Activated CD4-positive, alpha-beta T cell treated with anti-CD3 and anti-CD28 coated beads for 36 hours (primary cell): ENCODE measurements at regions of chr12 and their contacts with region 1.

Region 1: GRCh38 chr12:88241862-88242570 is 99.9 kb downstream of the TMTC3 start:
- DNase-seq: peak; percentile 57
- ATAC-seq: peak; percentile 95
- H3K4me3 Mint-ChIP-seq: no peak overlapping the region
- H3K27ac Mint-ChIP-seq: peak overlapping the region; percentile 91
- H3K4me1 Mint-ChIP-seq: peaks cover 36% of the 10 kb centered on the region
- H3K27me3 Mint-ChIP-seq: peaks cover 13% of the 10 kb centered on the region

Region 2: DNA sequence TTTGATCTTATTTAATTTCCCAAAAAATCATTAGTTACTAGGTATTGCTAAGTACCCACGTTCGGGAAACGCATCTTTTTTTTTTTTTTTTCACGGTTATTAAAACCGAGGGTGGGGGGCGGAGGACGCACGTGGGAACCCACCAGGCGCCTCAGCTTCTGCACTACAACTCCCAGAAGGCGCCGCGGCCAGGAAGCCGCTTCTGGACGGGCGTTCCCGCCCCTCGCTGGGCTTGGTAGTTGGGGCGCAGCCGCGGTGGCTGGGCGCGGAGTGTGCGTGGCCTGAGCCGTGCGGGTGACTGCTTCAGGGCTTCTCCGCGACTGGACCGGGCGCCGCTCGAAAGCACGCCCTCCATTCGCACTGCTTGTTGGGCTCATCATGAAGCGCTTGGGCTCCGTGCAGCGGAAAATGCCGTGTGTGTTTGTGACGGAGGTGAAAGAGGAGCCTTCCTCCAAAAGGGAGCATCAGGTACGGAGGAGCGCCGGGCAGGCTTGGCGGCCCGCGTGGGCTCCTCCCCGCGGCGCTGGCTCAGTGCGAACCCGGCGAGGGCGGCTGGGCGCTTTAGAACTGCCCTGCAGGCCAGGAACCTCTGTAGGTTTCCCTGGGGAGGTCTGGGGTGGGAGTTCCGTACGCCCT is 206.6 kb before region 1 on chr12:
- CTCF ChIA-PET with region 1: no interaction called
- POLR2A ChIA-PET with region 1: no interaction called
- intact Hi-C with region 1: loop called in 1 of 2 experiments (anchors 5 kb)
- DNase-seq: peak; percentile 94
- ATAC-seq: peak; percentile 98
- H3K4me3 Mint-ChIP-seq: peak overlapping the region; percentile 82
- H3K27ac Mint-ChIP-seq: peak overlapping the region; percentile 90
- H3K4me1 Mint-ChIP-seq: peaks cover 54% of the 10 kb centered on the region
- H3K27me3 Mint-ChIP-seq: no peaks in the 10 kb centered on the region

Region 3: DNA sequence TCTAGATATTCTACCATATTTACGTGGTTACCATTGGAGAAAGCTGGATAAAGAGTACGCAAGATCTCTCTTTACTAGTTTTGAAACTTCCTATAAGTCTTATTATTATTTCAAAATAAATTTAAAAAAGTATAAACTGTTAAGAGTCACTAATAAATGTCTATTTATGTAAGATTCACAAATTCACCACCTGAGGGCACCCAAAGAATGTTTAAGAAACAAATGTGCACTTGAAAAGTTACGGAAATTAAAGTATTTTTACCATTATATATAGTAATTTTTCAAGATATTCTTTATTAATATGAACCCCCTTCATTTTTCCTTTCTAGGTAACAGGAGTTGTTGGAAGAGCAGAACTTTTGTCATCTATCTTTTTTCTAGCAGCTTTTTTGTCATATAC is 88.1 kb before region 1 on chr12:
- CTCF ChIA-PET with region 1: no interaction called
- POLR2A ChIA-PET with region 1: no interaction called
- intact Hi-C with region 1: loop called in 1 of 2 experiments (anchors 5 kb)
- DNase-seq: no peak
- ATAC-seq: no peak
- H3K4me3 Mint-ChIP-seq: no peak overlapping the region
- H3K27ac Mint-ChIP-seq: no peak overlapping the region
- H3K4me1 Mint-ChIP-seq: peaks cover 22% of the 10 kb centered on the region
- H3K27me3 Mint-ChIP-seq: no peaks in the 10 kb centered on the region

Region 4: GRCh38 chr12:88393017-88393767 is 151.2 kb after region 1 on chr12:
- CTCF ChIA-PET with region 1: no interaction called
- POLR2A ChIA-PET with region 1: no interaction called
- intact Hi-C with region 1: loop called (anchors 1 to 5 kb)
- DNase-seq: no peak
- ATAC-seq: peak; percentile 37
- H3K4me3 Mint-ChIP-seq: no peak overlapping the region
- H3K27ac Mint-ChIP-seq: no peak overlapping the region
- H3K4me1 Mint-ChIP-seq: peaks cover 11% of the 10 kb centered on the region
- H3K27me3 Mint-ChIP-seq: peaks cover 11% of the 10 kb centered on the region

Region 5: DNA sequence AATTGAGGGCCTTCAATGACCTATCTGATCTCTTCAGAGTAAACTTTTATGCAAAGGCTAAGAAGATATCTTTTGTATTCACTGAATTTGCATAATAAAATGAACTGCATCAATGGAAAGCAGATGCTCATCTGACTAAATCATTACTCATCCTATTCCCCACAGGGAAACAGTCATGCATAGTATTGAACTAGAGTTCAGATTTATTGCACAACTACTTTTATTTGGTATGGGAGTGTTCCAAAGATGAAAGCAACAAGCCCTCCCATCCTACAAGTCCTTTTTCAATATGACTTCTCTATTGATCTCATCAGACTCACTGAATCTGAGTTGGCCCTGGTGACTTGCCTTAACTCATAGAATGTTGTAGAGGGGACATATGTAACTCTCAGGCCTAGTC is 178.4 kb after region 1 on chr12:
- CTCF ChIA-PET with region 1: no interaction called
- POLR2A ChIA-PET with region 1: no interaction called
- intact Hi-C with region 1: no loop called
- DNase-seq: no peak
- ATAC-seq: peak; percentile 76
- H3K4me3 Mint-ChIP-seq: no peak overlapping the region
- H3K27ac Mint-ChIP-seq: no peak overlapping the region
- H3K4me1 Mint-ChIP-seq: peaks cover 3% of the 10 kb centered on the region
- H3K27me3 Mint-ChIP-seq: no peaks in the 10 kb centered on the region

Region 6: DNA sequence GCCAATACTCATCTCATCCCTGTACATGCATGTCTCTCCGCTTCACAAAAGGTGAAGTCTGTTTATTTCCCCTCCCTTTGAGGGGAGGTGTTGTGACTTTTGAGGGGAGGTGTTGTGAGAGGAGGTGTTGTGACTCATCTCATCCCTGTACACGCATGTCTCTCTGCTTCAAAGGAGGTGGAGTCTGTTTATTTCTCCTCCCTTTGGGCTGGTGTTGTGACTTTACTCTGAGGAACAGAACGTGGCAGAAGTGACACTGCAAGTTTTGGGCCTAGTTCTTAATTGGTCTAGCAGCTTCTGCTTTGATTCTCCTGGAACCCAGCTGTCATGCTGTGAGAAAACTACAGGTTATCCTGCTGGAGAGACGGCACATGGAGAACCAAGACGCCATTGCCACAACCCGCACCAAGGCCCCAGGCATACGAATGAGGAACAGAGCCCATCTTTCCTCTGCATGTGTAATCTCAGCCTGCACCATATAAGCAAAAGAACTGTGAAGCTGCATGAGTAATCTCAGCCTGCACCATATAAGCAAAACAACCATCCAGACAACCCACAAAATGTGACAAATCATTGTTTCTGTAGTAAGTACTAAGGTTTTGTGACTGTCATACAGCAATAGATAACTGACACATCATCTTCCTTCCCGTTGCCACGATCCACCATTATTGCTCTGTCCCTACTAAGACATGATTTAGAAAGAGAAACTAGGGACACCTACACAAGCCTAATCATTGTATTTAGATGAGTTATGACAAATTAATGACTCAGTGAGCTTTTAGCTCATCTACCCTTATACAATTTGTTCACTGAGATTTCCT is 1252.6 kb after region 1 on chr12:
- CTCF ChIA-PET with region 1: no interaction called
- POLR2A ChIA-PET with region 1: no interaction called
- intact Hi-C with region 1: loop called in 1 of 2 experiments (anchors 10 kb)
- DNase-seq: peak; percentile 72
- ATAC-seq: peak; percentile 90
- H3K4me3 Mint-ChIP-seq: peak overlapping the region; percentile 28
- H3K27ac Mint-ChIP-seq: peak overlapping the region; percentile 92
- H3K4me1 Mint-ChIP-seq: peaks cover 27% of the 10 kb centered on the region
- H3K27me3 Mint-ChIP-seq: no peaks in the 10 kb centered on the region